ENCODE measurements at regions of chr4 and their contacts with region 1.

Region 1: GRCh38 chr4:109998867-109999584 is 86.3 kb downstream of the EGF start:
- DNase-seq: peak; percentile 68
- ATAC-seq: peak; percentile 93
- H3K4me3 ChIP-seq: no peak overlapping the region
- H3K27ac ChIP-seq: no peak overlapping the region
- H3K4me1 ChIP-seq: no peaks in the 10 kb centered on the region
- H3K27me3 ChIP-seq: no peaks in the 10 kb centered on the region
- CTCF ChIP-seq: peak; percentile 48 to 93 (median 78)
- POLR2A ChIP-seq: no peak
- RAD21 ChIP-seq: peak; percentile 88

Region 2: GRCh38 chr4:110510955-110511544 is 512.0 kb after region 1 on chr4:
- CTCF ChIA-PET with region 1: interaction called, 37 read pairs
- POLR2A ChIA-PET with region 1: interaction called, 4 read pairs
- RAD21 ChIA-PET with region 1: interaction called, 4 to 5 read pairs
- intact Hi-C with region 1: loop called (anchors 1 kb)
- DNase-seq: peak; percentile 56
- ATAC-seq: peak; percentile 69
- H3K4me3 ChIP-seq: no peak overlapping the region
- H3K27ac ChIP-seq: no peak overlapping the region
- H3K4me1 ChIP-seq: peaks cover 0 to 9% of the 10 kb centered on the region in 2 experiments; a peak in 1 of 4 replicates
- H3K27me3 ChIP-seq: no peaks in the 10 kb centered on the region
- CTCF ChIP-seq: peak; percentile 52 to 73 (median 62); a peak in 4 of 6 replicates
- POLR2A ChIP-seq: no peak
- RAD21 ChIP-seq: peak; percentile 74

Region 3: GRCh38 chr4:110586131-110586850 is 587.3 kb after region 1 on chr4:
- CTCF ChIA-PET with region 1: interaction called, 5 read pairs
- POLR2A ChIA-PET with region 1: no interaction called
- RAD21 ChIA-PET with region 1: no interaction called
- intact Hi-C with region 1: loop called (anchors 2 kb)
- DNase-seq: peak; percentile 31
- ATAC-seq: peak; percentile 86
- H3K4me3 ChIP-seq: no peak overlapping the region
- H3K27ac ChIP-seq: no peak overlapping the region
- H3K4me1 ChIP-seq: no peaks in the 10 kb centered on the region
- H3K27me3 ChIP-seq: no peaks in the 10 kb centered on the region
- CTCF ChIP-seq: peak; percentile 57 to 64 (median 57); a peak in 5 of 6 replicates
- POLR2A ChIP-seq: no peak
- RAD21 ChIP-seq: peak; percentile 65

Region 4: GRCh38 chr4:111631215-111631999 is 1632.4 kb after region 1 on chr4:
- CTCF ChIA-PET with region 1: interaction called, 4 read pairs
- POLR2A ChIA-PET with region 1: no interaction called
- RAD21 ChIA-PET with region 1: no interaction called
- intact Hi-C with region 1: loop called (anchors 1 kb)
- DNase-seq: peak; percentile 12
- ATAC-seq: peak; percentile 67
- H3K4me3 ChIP-seq: no peak overlapping the region
- H3K27ac ChIP-seq: no peak overlapping the region
- H3K4me1 ChIP-seq: no peaks in the 10 kb centered on the region
- H3K27me3 ChIP-seq: no peaks in the 10 kb centered on the region
- CTCF ChIP-seq: peak; percentile 57 to 67 (median 58); a peak in 5 of 6 replicates
- POLR2A ChIP-seq: no peak
- RAD21 ChIP-seq: peak; percentile 47; the same call in 1 of the 2 replicates